ENCODE measurements at regions of chr7 and their contacts with region 1.

Region 1: GRCh38 chr7:77536413-77537135 is 521 bp upstream of the PTPN12 start:
- DNase-seq: peak; percentile 98
- H3K4me3 Mint-ChIP-seq: peak overlapping the region; percentile 98
- H3K27ac Mint-ChIP-seq: peak overlapping the region; percentile 84
- H3K4me1 Mint-ChIP-seq: peaks cover 7% of the 10 kb centered on the region
- H3K27me3 Mint-ChIP-seq: no peaks in the 10 kb centered on the region

Region 2: DNA sequence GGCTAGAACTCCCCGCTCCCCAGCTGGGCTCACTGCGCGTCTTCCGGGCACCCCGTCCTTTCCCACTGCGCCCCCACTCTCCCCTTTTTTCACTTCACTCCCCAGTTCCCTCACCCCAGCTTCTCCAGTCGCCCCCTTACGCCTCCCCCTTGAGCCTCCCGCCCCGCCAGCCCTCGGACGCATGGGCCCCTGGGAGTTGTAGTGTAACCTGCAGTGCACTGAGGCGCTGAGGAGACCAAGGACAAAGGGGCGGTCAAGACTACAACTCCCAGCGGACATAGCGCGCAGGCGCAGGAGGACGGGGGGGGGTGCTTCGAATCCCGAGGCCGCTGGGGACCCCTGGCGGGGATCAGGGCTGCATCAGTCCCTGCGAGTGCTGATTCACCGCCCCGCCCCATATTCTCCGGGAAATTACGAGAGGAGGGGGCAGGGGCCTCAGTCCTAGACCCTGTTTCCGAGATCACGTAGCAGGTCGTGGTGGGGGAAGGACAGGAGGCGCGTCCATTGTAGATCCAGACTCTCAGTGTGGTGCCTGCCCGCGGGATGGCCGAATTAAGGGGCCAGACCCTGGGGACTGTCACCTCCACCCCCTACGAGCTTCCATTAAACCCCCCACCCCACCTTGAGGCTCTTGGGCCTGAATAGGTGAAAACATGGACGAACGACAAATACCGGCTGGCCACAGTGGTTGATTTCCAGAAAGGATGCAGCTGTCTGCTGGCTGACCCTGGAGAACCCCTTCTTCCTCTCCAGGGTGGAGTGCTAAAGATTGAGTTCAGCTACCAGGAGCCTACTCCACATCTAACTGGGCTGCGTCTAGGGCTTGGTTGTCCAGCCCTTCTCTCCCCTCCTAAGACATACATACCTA is 1177.2 kb before region 1 on chr7:
- CTCF ChIA-PET with region 1: no interaction called
- intact Hi-C with region 1: loop called (anchors 5 kb)
- DNase-seq: peak; percentile 99
- H3K4me3 Mint-ChIP-seq: peak overlapping the region; percentile 91
- H3K27ac Mint-ChIP-seq: peak overlapping the region; percentile 94
- H3K4me1 Mint-ChIP-seq: peaks cover 42% of the 10 kb centered on the region
- H3K27me3 Mint-ChIP-seq: no peaks in the 10 kb centered on the region

Region 3: GRCh38 chr7:77266291-77266794 is 270.2 kb before region 1 on chr7:
- CTCF ChIA-PET with region 1: no interaction called
- intact Hi-C with region 1: loop called (anchors 1 kb)
- DNase-seq: peak; percentile 49
- H3K4me3 Mint-ChIP-seq: no peak overlapping the region
- H3K27ac Mint-ChIP-seq: peak overlapping the region; percentile 50
- H3K4me1 Mint-ChIP-seq: peaks cover 13% of the 10 kb centered on the region
- H3K27me3 Mint-ChIP-seq: no peaks in the 10 kb centered on the region

Region 4: GRCh38 chr7:77351539-77352004 is 185.0 kb before region 1 on chr7:
- CTCF ChIA-PET with region 1: no interaction called
- intact Hi-C with region 1: loop called (anchors 5 kb)
- DNase-seq: peak; percentile 54
- H3K4me3 Mint-ChIP-seq: peak overlapping the region; percentile 51
- H3K27ac Mint-ChIP-seq: peak overlapping the region; percentile 37
- H3K4me1 Mint-ChIP-seq: peaks cover 55% of the 10 kb centered on the region
- H3K27me3 Mint-ChIP-seq: no peaks in the 10 kb centered on the region

Region 5: GRCh38 chr7:77415823-77416622 is 120.6 kb before region 1 on chr7 and contains the start of gene GSAP:
- CTCF ChIA-PET with region 1: no interaction called
- intact Hi-C with region 1: loop called (anchors 2 kb)
- DNase-seq: peak; percentile 44
- H3K4me3 Mint-ChIP-seq: peak within 1 kb of the TSS; percentile 68
- H3K27ac Mint-ChIP-seq: no peak within 1 kb of the TSS
- H3K4me1 Mint-ChIP-seq: peaks cover 32% of the 10 kb centered on the region
- H3K27me3 Mint-ChIP-seq: no peaks in the 10 kb centered on the region
- total RNA-seq, gene GSAP: 1.1 to 1.5 TPM

Region 6: GRCh38 chr7:77696198-77697028 is 159.8 kb after region 1 on chr7 and contains the start of gene RSBN1L:
- CTCF ChIA-PET with region 1: no interaction called
- intact Hi-C with region 1: loop called (anchors 1 kb)
- DNase-seq: peak; percentile 98
- H3K4me3 Mint-ChIP-seq: peak within 1 kb of the TSS; percentile 97
- H3K27ac Mint-ChIP-seq: peak within 1 kb of the TSS; percentile 96
- H3K4me1 Mint-ChIP-seq: peaks cover 44% of the 10 kb centered on the region
- H3K27me3 Mint-ChIP-seq: no peaks in the 10 kb centered on the region
- total RNA-seq, gene RSBN1L: 15.7 to 16.9 TPM